Calu3 (cell line): ENCODE measurements at regions of chr7 and their contacts with region 1.

Region 1: DNA sequence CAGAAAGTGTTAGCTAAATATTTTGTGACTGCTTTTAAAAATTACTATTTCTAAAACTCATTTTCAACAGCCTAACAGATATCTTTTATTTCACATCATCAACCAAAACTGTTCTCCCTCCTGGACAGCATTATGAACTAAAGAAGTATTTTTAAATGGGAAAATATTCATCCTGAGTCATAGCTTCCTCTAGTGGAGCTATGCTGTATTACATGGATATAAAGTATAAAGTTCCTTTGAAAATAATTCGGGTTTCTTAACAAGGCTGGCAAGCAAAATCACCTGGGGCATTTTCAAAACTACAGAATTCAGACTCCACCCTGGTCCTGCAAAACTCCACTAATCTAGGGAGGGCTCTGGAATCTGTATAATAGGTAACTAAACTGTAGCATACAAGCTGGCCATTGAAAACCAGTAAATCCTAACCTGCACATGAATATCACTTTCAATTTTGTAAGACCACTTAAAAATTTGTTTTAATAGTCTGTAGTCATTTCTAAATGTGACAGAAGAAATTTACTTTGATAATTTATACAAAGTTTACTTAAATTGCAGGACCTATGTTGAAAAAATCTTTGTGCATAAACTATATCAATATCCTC is 53.5 kb downstream of the SCIN start:
- DNase-seq: no peak
- H3K4me3 Mint-ChIP-seq: no peak overlapping the region
- H3K27ac Mint-ChIP-seq: no peak overlapping the region
- H3K4me1 Mint-ChIP-seq: peaks cover 18% of the 10 kb centered on the region
- H3K27me3 Mint-ChIP-seq: no peaks in the 10 kb centered on the region
- CTCF ChIP-seq: peak; percentile 90

Region 2: DNA sequence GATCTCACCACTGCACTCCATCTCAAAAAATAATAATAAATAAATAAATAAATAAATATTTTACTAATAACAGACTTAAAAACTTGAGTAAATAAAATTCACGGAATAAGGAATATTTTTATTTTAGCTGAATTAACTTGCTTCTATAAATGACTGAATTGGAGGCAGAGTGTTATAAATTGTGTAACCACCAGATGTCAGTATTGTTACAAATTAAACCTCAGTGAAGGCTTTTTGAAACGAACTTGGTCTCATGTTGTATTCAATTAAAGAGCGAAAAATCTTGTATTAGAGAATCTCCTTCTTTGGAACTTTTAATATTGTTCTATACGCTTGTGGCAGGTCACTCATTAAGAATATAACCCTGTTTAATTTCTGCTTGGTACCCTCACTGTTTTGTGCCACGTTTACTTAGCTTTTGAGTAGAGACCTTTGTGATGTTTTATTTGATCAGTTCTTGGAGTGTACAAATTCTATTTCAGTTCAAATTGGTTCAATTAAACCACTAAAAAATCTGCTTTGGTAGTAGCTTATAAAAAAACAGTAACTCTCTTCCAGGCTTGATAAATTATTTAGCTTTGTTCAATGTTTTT is 99.1 kb before region 1 on chr7:
- CTCF ChIA-PET with region 1: interaction called, 37 read pairs
- intact Hi-C with region 1: loop called (anchors 1 kb)
- DNase-seq: no peak
- H3K4me3 Mint-ChIP-seq: no peak overlapping the region
- H3K27ac Mint-ChIP-seq: peak overlapping the region; percentile 45
- H3K4me1 Mint-ChIP-seq: no peaks in the 10 kb centered on the region
- H3K27me3 Mint-ChIP-seq: no peaks in the 10 kb centered on the region
- CTCF ChIP-seq: peak; percentile 59

Region 3: DNA sequence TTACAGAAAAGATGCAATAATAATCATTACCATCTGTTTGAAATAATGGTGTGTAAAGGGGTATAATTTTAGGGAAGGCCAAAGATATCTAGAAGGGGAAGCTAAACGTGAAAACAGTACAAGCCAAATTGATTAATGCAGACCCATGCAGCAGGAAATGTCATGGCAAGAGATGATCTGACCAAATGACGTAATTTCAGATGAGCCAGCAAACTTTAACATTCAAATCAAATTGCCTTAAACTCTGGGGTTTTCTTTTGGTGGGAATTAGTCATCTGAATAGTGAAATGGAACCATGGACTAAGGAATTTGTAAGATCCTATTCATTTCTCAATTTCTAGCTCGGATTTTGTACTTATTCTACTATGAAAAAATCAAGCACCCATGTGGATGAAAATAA is 74.9 kb before region 1 on chr7:
- CTCF ChIA-PET with region 1: interaction called, 10 read pairs
- intact Hi-C with region 1: no loop called
- DNase-seq: no peak
- H3K4me3 Mint-ChIP-seq: no peak overlapping the region
- H3K27ac Mint-ChIP-seq: no peak overlapping the region
- H3K4me1 Mint-ChIP-seq: no peaks in the 10 kb centered on the region
- H3K27me3 Mint-ChIP-seq: no peaks in the 10 kb centered on the region
- CTCF ChIP-seq: no peak

Region 4: GRCh38 chr7:12570534-12571461 is 53.2 kb before region 1 on chr7 and contains the start of gene SCIN:
- CTCF ChIA-PET with region 1: interaction called, 3 read pairs
- intact Hi-C with region 1: loop called (anchors 1 kb)
- DNase-seq: peak; percentile 77
- H3K4me3 Mint-ChIP-seq: peak within 1 kb of the TSS; percentile 83
- H3K27ac Mint-ChIP-seq: peak within 1 kb of the TSS; percentile 76
- H3K4me1 Mint-ChIP-seq: peaks cover 33% of the 10 kb centered on the region
- H3K27me3 Mint-ChIP-seq: no peaks in the 10 kb centered on the region
- CTCF ChIP-seq: no peak
- total RNA-seq, gene SCIN: 22.6 and 28.3 TPM in 2 replicates

Region 5: GRCh38 chr7:12884856-12885440 is 260.9 kb after region 1 on chr7:
- CTCF ChIA-PET with region 1: no interaction called
- intact Hi-C with region 1: no loop called
- DNase-seq: no peak
- H3K4me3 Mint-ChIP-seq: no peak overlapping the region
- H3K27ac Mint-ChIP-seq: no peak overlapping the region
- H3K4me1 Mint-ChIP-seq: peaks cover 17% of the 10 kb centered on the region
- H3K27me3 Mint-ChIP-seq: no peaks in the 10 kb centered on the region
- CTCF ChIP-seq: no peak

Region 6: DNA sequence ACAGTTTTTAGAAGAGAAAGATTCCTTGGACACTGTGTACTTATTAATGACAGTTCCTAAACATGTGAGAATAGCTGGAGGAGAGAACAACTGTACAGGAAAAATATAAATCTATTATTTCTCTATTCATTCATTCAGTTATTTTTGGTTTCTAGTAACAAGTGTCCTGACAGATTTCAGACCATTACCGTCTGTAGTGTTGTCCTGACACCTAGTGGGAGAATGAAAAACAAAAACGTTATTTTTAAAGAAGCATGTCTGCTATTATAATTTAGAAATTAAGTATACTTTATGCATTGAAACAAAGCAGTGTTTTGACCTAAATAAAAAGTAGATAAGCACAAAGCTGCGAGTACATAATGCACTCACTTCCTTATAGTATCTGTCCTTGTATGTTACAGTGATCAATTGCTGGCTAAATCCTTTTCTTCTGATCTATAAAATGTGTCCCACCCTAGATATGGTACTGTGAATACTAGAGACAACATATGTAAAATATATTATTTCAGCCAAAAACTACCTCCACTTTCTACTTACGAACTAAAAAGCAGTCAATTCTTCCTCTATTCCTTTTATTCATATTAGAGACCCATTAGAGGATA is 639.0 kb after region 1 on chr7:
- CTCF ChIA-PET with region 1: no interaction called
- intact Hi-C with region 1: loop called (anchors 1 kb)
- DNase-seq: peak; percentile 25
- H3K4me3 Mint-ChIP-seq: no peak overlapping the region
- H3K27ac Mint-ChIP-seq: no peak overlapping the region
- H3K4me1 Mint-ChIP-seq: no peaks in the 10 kb centered on the region
- H3K27me3 Mint-ChIP-seq: peaks cover 12% of the 10 kb centered on the region
- CTCF ChIP-seq: peak; percentile 74